Activated T-helper 1 cell treated with anti-CD3 and anti-CD28 coated beads, Interleukin-12 subunit alpha, Interleukin-12 subunit beta, Interleukin-2, Interleukin-4 antibody, amounts not matched to agents 30 ng/mL and 10 ng/mL and 1 ng/mL, durations not matched to agents 14 hours and 24 hours and 36 hours (primary cell): ENCODE measurements at regions of chr7 and their contacts with region 1.

Region 1: DNA sequence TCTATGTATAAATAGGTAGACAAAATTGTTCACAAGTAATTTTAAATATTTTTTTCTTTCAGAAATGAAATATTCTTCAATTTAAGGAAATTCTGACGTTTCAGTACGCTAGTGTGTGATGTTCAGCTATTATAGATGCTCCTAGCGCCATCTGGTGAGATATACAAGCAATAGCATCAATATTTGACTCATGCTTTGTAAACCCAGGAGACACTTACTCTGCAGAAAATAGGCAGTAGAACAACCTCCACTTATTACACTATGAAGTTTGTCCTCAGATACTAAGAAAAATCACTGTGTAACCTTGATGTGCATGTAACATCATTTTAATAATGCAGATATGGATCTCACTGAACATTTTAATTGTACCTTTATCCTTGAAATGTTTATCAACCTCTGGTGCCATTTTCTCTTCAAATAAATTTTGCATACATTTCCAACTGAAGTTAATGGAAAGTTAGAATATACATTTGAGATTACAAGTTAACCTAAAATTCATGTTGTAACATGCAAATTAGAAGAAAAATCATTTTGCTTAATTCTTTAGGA is 151.5 kb upstream of the FAM3C start:
- DNase-seq: no peak
- H3K4me3 Mint-ChIP-seq: no peak overlapping the region
- H3K27ac Mint-ChIP-seq: no peak overlapping the region
- H3K4me1 Mint-ChIP-seq: peaks cover 39% of the 10 kb centered on the region
- H3K27me3 Mint-ChIP-seq: peaks cover 9% of the 10 kb centered on the region

Region 2: GRCh38 chr7:121126801-121127534 is 420.6 kb before region 1 on chr7:
- intact Hi-C with region 1: loop called (anchors 5 kb)
- DNase-seq: no peak
- H3K4me3 Mint-ChIP-seq: no peak overlapping the region
- H3K27ac Mint-ChIP-seq: no peak overlapping the region
- H3K4me1 Mint-ChIP-seq: no peaks in the 10 kb centered on the region
- H3K27me3 Mint-ChIP-seq: peaks cover 5% of the 10 kb centered on the region

Region 3: DNA sequence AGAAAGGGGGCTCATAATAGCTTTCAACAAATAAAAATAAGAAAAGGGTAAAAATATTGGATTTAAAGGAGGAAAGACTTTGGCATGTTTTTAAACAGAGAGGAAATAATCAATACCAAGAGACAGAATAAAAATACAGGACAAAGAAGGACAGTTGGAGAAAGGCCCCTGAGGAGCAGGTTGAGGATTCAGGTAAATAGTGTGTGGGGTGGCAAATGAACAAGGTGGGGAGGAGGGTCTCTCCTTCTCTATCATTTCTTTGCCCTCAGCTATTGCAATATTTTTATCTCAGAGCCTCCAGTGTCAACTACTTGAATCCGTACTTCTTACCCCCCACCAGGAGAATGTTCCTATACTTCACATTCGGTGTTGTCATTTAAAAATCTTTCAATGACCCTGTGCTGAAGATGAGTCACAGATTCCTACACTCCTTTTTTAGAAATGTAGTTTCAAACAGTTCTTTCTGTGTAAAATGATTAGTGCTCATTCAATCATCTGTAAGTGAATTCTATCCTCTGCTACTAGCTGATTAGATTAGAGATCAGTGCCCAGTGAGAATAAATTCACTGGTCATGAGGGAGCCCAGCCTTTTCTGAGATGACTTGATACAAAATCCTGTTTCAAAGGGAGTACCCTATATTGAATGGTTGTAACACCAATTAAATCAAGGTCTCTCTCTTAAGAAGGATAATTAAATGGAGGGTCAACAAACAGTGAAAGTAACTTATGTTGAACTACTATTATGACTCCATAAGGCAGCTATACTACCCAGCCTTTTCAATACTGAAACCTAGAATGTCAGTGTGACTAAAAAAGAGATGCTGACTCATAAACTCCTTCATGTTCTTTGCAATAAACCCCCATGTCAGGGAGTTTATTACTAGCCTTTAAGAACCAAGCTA is 269.2 kb before region 1 on chr7:
- intact Hi-C with region 1: loop called (anchors 1 kb)
- DNase-seq: no peak
- H3K4me3 Mint-ChIP-seq: no peak overlapping the region
- H3K27ac Mint-ChIP-seq: no peak overlapping the region
- H3K4me1 Mint-ChIP-seq: peaks cover 18% of the 10 kb centered on the region
- H3K27me3 Mint-ChIP-seq: peaks cover 8% of the 10 kb centered on the region

Region 4: GRCh38 chr7:121366852-121367431 is 180.7 kb before region 1 on chr7:
- intact Hi-C with region 1: loop called (anchors 1 kb)
- DNase-seq: no peak
- H3K4me3 Mint-ChIP-seq: peak overlapping the region; percentile 62
- H3K27ac Mint-ChIP-seq: no peak overlapping the region
- H3K4me1 Mint-ChIP-seq: peaks cover 53% of the 10 kb centered on the region
- H3K27me3 Mint-ChIP-seq: no peaks in the 10 kb centered on the region